HEK293 (cell line): ENCODE measurements at regions of chr1 and their contacts with region 1.

Region 1: GRCh38 chr1:243267914-243268653 is 12.2 kb downstream of the SDCCAG8 start:
- H3K4me3 ChIP-seq: no peak overlapping the region
- H3K27ac ChIP-seq: no peak overlapping the region
- H3K4me1 ChIP-seq: peaks cover under 1% of the 10 kb centered on the region; the same call in 1 of the 2 replicates
- CTCF ChIP-seq: no peak

Region 2: DNA sequence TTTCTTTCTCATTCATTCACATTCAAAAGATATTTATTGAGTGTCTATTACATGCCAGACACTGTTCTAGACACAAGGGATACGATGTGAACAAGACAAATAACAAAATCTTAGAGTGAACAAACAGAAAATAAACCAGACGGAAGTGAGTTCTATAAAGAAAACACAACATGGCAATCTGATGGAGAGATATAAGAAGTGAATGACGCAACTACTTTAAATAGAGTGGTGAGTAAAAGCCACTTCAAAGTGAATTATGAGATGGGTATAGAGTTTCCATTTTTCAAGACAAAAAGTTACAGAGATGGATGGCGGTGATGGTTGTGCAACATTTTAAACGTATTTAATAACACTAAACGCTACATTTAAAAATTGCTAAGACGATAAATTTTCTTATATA is 88.4 kb before region 1 on chr1:
- CTCF ChIA-PET with region 1: no interaction called
- POLR2A ChIA-PET with region 1: no interaction called
- H3K4me3 ChIP-seq: no peak overlapping the region
- H3K27ac ChIP-seq: no peak overlapping the region
- H3K4me1 ChIP-seq: peaks cover 6% of the 10 kb centered on the region; the same call in 1 of the 2 replicates
- CTCF ChIP-seq: no peak

Region 3: GRCh38 chr1:243255791-243256512 is 12.1 kb before region 1 on chr1 and contains the start of gene SDCCAG8:
- CTCF ChIA-PET with region 1: no interaction called
- POLR2A ChIA-PET with region 1: interaction called, 13 read pairs
- H3K4me3 ChIP-seq: peak within 1 kb of the TSS; percentile 91
- H3K27ac ChIP-seq: peak within 1 kb of the TSS; percentile 89
- H3K4me1 ChIP-seq: peaks cover 6% of the 10 kb centered on the region
- CTCF ChIP-seq: peak; percentile 32; the same call in 1 of the 2 replicates

Region 4: DNA sequence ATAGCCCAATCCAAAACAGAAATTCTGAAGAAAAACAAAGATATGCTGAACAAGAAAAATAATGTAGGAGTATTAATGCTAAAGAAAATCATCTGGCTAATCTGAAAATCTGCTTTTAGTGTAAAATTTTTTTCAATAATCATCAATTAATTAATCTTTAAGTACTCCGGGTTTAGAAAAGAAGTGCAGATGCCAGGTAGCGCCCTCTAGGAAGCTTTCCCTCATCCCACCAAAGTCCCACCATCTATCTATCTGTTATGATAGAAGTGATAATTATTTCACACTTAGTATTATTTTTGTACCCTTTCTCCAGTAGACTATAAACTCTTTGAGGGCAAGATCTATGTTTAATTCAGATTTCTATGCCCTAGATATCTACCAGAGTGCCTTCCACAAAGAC is 341.6 kb after region 1 on chr1:
- CTCF ChIA-PET with region 1: no interaction called
- POLR2A ChIA-PET with region 1: no interaction called
- H3K4me3 ChIP-seq: no peak overlapping the region
- H3K27ac ChIP-seq: no peak overlapping the region
- H3K4me1 ChIP-seq: no peaks in the 10 kb centered on the region
- CTCF ChIP-seq: no peak